CD14-positive monocyte (primary cell): ENCODE measurements at regions of chr5 and their contacts with region 1.

Region 1: DNA sequence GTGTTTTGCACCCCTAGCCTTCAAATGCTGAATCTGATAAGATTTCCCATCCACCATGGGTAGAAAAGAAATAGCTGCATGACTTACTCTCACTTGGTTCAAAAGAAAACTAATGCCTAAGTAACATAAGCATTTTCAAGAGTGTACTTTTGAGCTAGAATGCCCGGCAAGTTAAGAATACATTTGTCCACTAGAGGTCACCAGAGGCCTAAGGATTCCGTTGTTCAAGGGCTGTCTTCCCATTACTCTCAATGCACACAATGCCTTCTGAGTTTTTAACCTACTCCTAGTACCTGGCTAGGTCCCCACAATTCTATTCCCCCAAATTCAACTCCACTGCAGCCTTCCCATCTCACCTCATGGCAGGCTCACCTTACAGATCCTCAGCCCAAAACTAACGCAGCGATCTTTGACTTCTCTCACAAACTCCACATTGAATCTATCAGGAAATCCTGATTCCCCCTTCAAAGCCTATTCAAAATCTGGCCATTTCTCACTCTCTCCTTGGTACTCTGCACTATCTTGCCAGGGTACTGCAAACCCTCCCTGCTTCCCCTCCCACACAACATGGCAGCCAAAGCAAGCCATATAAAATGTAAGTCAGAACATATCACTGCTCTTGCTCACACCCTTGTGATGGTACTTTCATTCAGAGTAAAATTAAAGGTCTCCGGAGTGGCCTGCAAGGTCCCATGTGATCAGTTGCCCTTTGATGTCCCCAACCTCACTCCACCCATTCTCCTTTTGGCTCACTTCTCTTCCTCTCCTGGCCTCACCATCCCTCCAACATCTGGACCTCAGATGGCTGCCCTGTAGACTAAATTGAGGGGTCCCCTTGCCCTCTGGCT is 13.4 kb downstream of the OXCT1 start:
- DNase-seq: peak; percentile 49 to 68 (median 59)
- H3K4me3 ChIP-seq: no peak overlapping the region
- H3K4me3 Mint-ChIP-seq: no peak overlapping the region
- H3K27ac ChIP-seq: no peak overlapping the region
- H3K27ac Mint-ChIP-seq: no peak overlapping the region
- H3K4me1 ChIP-seq: no peaks in the 10 kb centered on the region
- H3K4me1 Mint-ChIP-seq: no peaks in the 10 kb centered on the region
- H3K27me3 ChIP-seq: no peaks in the 10 kb centered on the region
- H3K27me3 Mint-ChIP-seq: no peaks in the 10 kb centered on the region
- CTCF ChIP-seq: peak; percentile 88

Region 2: DNA sequence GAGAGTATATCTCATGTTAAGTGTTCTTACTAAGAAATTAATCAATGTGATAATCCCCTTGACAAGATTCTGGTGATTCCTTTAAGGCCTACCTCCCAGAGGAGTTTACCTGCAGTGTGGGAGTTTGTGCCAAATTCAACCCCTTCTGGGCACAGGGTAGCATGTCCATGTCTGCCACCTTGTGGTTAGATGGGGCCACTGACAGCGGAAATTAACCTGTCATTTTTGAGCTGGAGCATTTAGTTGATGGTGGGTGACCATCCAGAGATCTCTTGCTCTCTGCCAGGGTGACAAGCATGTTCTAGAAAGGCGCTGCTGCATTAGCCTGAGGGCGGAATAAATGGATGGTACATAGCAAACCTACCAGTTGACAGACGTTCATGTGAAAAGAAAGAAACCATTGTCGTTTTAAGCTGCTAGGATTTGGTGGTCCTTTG is 200.4 kb after region 1 on chr5:
- intact Hi-C with region 1: loop called (anchors 2 to 5 kb)
- DNase-seq: peak; percentile 9 to 24 (median 10)
- H3K4me3 ChIP-seq: no peak overlapping the region
- H3K4me3 Mint-ChIP-seq: no peak overlapping the region
- H3K27ac ChIP-seq: no peak overlapping the region
- H3K27ac Mint-ChIP-seq: no peak overlapping the region
- H3K4me1 ChIP-seq: no peaks in the 10 kb centered on the region
- H3K4me1 Mint-ChIP-seq: no peaks in the 10 kb centered on the region
- H3K27me3 ChIP-seq: no peaks in the 10 kb centered on the region
- H3K27me3 Mint-ChIP-seq: peaks cover under 1 to 5% (median 2%) of the 10 kb centered on the region in 3 donors
- CTCF ChIP-seq: peak; percentile 69

Region 3: DNA sequence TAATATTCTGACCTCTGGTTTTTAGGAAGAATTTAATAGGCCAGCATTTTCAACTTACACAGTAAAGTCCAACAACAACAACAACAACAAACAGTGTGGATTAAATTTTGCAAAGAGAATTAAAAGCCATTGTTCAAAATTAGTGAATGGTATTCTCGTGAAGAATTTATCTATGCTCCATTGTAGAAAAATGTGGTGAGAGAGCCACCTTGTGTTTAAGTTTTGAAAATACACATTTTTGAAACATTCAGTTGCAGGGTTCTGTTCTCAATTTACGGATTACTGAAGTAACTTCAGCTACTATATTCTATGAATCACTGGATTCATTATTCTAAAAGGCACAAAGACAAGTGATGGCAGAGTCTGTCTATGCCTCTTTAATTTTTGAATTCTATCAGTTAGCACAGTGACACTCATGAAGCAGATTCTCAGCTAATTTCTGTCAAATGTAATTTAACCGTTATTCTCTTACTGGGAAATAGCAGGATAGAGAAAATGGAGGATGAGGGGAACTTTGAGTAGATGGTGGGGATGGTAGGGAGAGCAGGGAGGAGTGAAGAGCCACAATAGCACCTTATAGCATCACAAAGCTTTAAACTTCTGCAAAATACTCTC is 910.7 kb after region 1 on chr5:
- intact Hi-C with region 1: loop called (anchors 2 kb)
- DNase-seq: peak in 2 of 3 donors; percentile 6 to 31
- H3K4me3 ChIP-seq: no peak overlapping the region
- H3K4me3 Mint-ChIP-seq: no peak overlapping the region
- H3K27ac ChIP-seq: no peak overlapping the region
- H3K27ac Mint-ChIP-seq: peak overlapping the region in 1 of 7 donors; percentile 36
- H3K4me1 ChIP-seq: no peaks in the 10 kb centered on the region
- H3K4me1 Mint-ChIP-seq: peaks cover 6% of the 10 kb centered on the region
- H3K27me3 ChIP-seq: no peaks in the 10 kb centered on the region
- H3K27me3 Mint-ChIP-seq: peaks cover 0 to 5% (median 2%) of the 10 kb centered on the region in 3 donors
- CTCF ChIP-seq: peak; percentile 72

Region 4: GRCh38 chr5:42889311-42889933 is 1032.6 kb after region 1 on chr5:
- intact Hi-C with region 1: loop called in 1 of 2 experiments (anchors 5 kb)
- DNase-seq: peak; percentile 33 to 57 (median 47)
- H3K4me3 ChIP-seq: no peak overlapping the region
- H3K4me3 Mint-ChIP-seq: no peak overlapping the region
- H3K27ac ChIP-seq: no peak overlapping the region
- H3K27ac Mint-ChIP-seq: no peak overlapping the region
- H3K4me1 ChIP-seq: no peaks in the 10 kb centered on the region
- H3K4me1 Mint-ChIP-seq: no peaks in the 10 kb centered on the region
- H3K27me3 ChIP-seq: no peaks in the 10 kb centered on the region
- H3K27me3 Mint-ChIP-seq: no peaks in the 10 kb centered on the region
- CTCF ChIP-seq: peak; percentile 88